ENCODE measurements at regions of chr1 and their contacts with region 1.

Region 1: GRCh38 chr1:193121616-193122593 is at the start of gene CDC73:
- DNase-seq: peak; percentile 99
- H3K4me3 Mint-ChIP-seq: peak within 1 kb of the TSS; percentile 85
- H3K27ac Mint-ChIP-seq: peak within 1 kb of the TSS; percentile 98
- H3K4me1 Mint-ChIP-seq: peaks cover 45% of the 10 kb centered on the region
- H3K27me3 Mint-ChIP-seq: no peaks in the 10 kb centered on the region
- total RNA-seq, gene CDC73: 47.9 to 49.3 TPM

Region 2: GRCh38 chr1:192477630-192478029 is 644.3 kb before region 1 on chr1:
- CTCF ChIA-PET with region 1: no interaction called
- POLR2A ChIA-PET with region 1: no interaction called
- intact Hi-C with region 1: loop called (anchors 5 kb)
- DNase-seq: no peak
- H3K4me3 Mint-ChIP-seq: no peak overlapping the region
- H3K27ac Mint-ChIP-seq: no peak overlapping the region
- H3K4me1 Mint-ChIP-seq: no peaks in the 10 kb centered on the region
- H3K27me3 Mint-ChIP-seq: no peaks in the 10 kb centered on the region

Region 3: GRCh38 chr1:192539297-192540092 is 582.4 kb before region 1 on chr1:
- CTCF ChIA-PET with region 1: no interaction called
- POLR2A ChIA-PET with region 1: no interaction called
- intact Hi-C with region 1: loop called (anchors 5 kb)
- DNase-seq: no peak
- H3K4me3 Mint-ChIP-seq: no peak overlapping the region
- H3K27ac Mint-ChIP-seq: peak overlapping the region; percentile 63
- H3K4me1 Mint-ChIP-seq: peaks cover 49% of the 10 kb centered on the region
- H3K27me3 Mint-ChIP-seq: no peaks in the 10 kb centered on the region

Region 4: GRCh38 chr1:192936313-192937018 is 185.4 kb before region 1 on chr1:
- CTCF ChIA-PET with region 1: no interaction called
- POLR2A ChIA-PET with region 1: no interaction called
- intact Hi-C with region 1: loop called (anchors 5 kb)
- DNase-seq: no peak
- H3K4me3 Mint-ChIP-seq: no peak overlapping the region
- H3K27ac Mint-ChIP-seq: peak overlapping the region; percentile 36
- H3K4me1 Mint-ChIP-seq: peaks cover 20% of the 10 kb centered on the region
- H3K27me3 Mint-ChIP-seq: no peaks in the 10 kb centered on the region

Region 5: DNA sequence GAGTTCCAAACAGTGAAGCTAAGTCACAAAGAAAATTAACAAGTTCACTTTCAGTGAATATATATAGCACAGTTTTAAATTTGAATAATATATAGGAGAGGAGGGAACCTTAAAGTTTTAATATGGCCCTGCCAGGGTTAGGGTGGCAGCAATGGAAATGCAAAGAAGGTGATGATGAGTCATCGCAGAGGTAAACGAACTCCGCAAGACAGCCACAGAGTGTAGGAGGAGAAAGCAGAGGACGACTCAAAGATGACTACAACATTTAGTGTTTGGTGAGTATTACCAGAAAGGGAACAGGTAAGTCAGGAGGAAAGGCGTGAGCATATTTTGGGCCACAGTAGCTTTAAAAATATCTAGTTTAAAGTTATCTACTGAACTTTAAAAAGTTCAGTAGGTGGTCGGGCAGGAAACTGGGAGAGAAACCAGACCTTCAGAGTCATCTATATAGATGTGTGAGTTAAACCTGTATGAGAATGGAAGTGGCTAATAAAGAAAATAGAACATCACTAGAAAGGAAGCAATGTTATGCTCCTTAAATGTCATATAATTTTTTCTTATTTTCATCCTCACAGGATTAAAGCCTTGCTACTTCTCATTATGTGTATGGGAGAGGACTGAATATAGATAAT is 138.4 kb before region 1 on chr1:
- CTCF ChIA-PET with region 1: interaction called, 3 read pairs
- POLR2A ChIA-PET with region 1: no interaction called
- intact Hi-C with region 1: loop called (anchors 5 kb)
- DNase-seq: peak; percentile 68
- H3K4me3 Mint-ChIP-seq: no peak overlapping the region
- H3K27ac Mint-ChIP-seq: peak overlapping the region; percentile 82
- H3K4me1 Mint-ChIP-seq: peaks cover 45% of the 10 kb centered on the region
- H3K27me3 Mint-ChIP-seq: no peaks in the 10 kb centered on the region

Region 6: GRCh38 chr1:193104906-193105820 is 16.7 kb before region 1 on chr1 and contains the start of gene GLRX2:
- CTCF ChIA-PET with region 1: interaction called, 7 read pairs
- POLR2A ChIA-PET with region 1: interaction called, 3 read pairs
- intact Hi-C with region 1: loop called (anchors 1 kb)
- DNase-seq: peak; percentile 73
- H3K4me3 Mint-ChIP-seq: peak within 1 kb of the TSS; percentile 89
- H3K27ac Mint-ChIP-seq: peak within 1 kb of the TSS; percentile 72
- H3K4me1 Mint-ChIP-seq: peaks cover 17% of the 10 kb centered on the region
- H3K27me3 Mint-ChIP-seq: no peaks in the 10 kb centered on the region
- total RNA-seq, gene GLRX2: 25.4 to 25.8 TPM

Measured in activated CD4-positive, alpha-beta memory T cell treated with anti-CD3 and anti-CD28 coated beads for 36 hours (primary cell).